Activated CD4-positive, alpha-beta T cell treated with anti-CD3 and anti-CD28 coated beads for 36 hours (primary cell): ENCODE measurements at regions of chr14 and their contacts with region 1.

Region 1: DNA sequence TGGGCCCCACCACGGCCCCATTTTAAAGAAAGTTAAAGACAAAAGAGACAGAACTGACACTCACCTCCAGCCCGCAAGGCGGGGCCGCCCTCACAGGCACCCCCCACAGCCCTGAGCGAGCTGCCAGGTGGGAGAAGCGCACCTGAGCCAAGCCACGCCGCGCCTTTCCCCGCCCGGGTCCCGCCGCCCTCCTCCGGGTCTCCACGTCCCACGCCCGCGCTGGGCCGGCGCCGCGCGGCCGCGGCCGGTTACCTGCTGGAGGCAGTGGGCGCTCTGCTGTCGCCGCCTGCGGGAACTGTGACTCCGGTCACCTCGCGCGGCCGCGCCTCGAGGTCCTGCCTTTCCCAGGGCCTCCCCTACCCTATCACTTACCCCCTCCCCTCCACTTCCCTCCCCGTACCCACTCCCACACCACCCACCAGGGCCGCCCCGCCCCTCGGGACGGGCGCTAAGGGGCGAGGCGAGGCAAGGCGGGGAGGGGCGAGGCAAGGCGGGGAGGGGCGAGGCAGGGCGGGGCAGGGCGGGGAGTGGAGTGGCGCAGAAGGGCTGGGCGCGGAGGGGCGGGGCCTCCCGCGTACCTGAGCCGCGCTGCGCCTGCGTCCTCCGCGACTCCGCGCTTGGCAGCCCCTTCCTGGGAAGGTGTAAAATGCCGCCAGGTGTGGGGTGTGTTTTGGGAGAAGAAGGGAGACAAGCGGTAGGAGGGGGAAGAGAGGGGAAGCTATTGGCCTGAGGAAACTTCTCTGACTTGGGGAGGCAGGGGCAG is 31.0 kb downstream of the TC2N start:
- DNase-seq: peak; percentile 97
- ATAC-seq: peak; percentile 97
- H3K4me3 Mint-ChIP-seq: peak overlapping the region; percentile 83
- H3K27ac Mint-ChIP-seq: peak overlapping the region; percentile 76
- H3K4me1 Mint-ChIP-seq: peaks cover 70% of the 10 kb centered on the region
- H3K27me3 Mint-ChIP-seq: no peaks in the 10 kb centered on the region

Region 2: GRCh38 chr14:91573893-91574837 is 262.1 kb before region 1 on chr14:
- CTCF ChIA-PET with region 1: no interaction called
- POLR2A ChIA-PET with region 1: no interaction called
- intact Hi-C with region 1: loop called in 1 of 2 experiments (anchors 1 kb)
- DNase-seq: peak; percentile 96
- ATAC-seq: peak; percentile 91
- H3K4me3 Mint-ChIP-seq: peak overlapping the region; percentile 76
- H3K27ac Mint-ChIP-seq: peak overlapping the region; percentile 56
- H3K4me1 Mint-ChIP-seq: peaks cover 18% of the 10 kb centered on the region
- H3K27me3 Mint-ChIP-seq: peaks cover 10% of the 10 kb centered on the region

Region 3: DNA sequence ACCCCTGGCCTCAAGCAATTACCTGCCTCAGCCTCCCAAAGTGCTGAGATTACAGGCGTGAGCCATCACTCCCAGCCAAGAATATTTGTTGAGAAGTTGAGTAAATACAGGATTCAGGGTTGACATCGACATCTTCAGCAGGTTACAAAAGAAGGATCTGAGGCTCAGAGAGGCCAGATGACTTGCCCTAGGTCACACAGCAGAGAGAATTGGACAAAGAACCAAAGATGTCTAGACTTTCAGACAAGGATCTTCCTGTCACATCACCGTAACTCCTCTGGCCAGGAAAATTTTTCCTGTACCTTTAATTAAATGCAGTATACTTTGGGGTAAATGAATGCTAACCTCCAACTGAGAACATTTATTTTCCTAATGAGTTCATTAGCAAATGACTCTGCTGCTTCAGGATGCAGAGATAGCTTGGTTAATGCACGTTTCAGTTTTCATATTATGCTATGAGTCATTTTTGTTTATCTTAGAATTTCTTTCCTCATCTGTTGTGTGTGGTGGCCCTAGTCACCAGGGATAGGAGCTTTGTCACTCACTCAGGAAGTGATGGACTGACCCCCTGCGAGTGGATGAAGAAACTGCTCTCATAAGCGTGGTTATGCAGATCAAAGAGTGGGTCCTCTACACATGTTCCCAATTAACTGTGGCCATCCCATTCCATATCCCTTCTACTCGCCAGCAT is 22.1 kb after region 1 on chr14:
- CTCF ChIA-PET with region 1: interaction called, 7 read pairs
- POLR2A ChIA-PET with region 1: no interaction called
- intact Hi-C with region 1: loop called in 1 of 2 experiments (anchors 1 kb)
- DNase-seq: peak; percentile 58
- ATAC-seq: peak; percentile 75
- H3K4me3 Mint-ChIP-seq: peak overlapping the region; percentile 9
- H3K27ac Mint-ChIP-seq: peak overlapping the region; percentile 86
- H3K4me1 Mint-ChIP-seq: peaks cover 91% of the 10 kb centered on the region
- H3K27me3 Mint-ChIP-seq: no peaks in the 10 kb centered on the region

Region 4: GRCh38 chr14:91893007-91893406 is 56.7 kb after region 1 on chr14:
- CTCF ChIA-PET with region 1: interaction called, 3 read pairs
- POLR2A ChIA-PET with region 1: no interaction called
- intact Hi-C with region 1: loop called in 1 of 2 experiments (anchors 1 kb)
- DNase-seq: peak; percentile 53
- ATAC-seq: peak; percentile 53
- H3K4me3 Mint-ChIP-seq: no peak overlapping the region
- H3K27ac Mint-ChIP-seq: peak overlapping the region; percentile 89
- H3K4me1 Mint-ChIP-seq: peaks cover 51% of the 10 kb centered on the region
- H3K27me3 Mint-ChIP-seq: no peaks in the 10 kb centered on the region

Region 5: GRCh38 chr14:92106143-92106926 is 270.0 kb after region 1 on chr14 and contains the start of gene ATXN3:
- CTCF ChIA-PET with region 1: no interaction called
- POLR2A ChIA-PET with region 1: no interaction called
- intact Hi-C with region 1: loop called in 1 of 2 experiments (anchors 2 kb)
- DNase-seq: peak; percentile 98
- ATAC-seq: peak; percentile 97
- H3K4me3 Mint-ChIP-seq: peak within 1 kb of the TSS; percentile 90
- H3K27ac Mint-ChIP-seq: peak within 1 kb of the TSS; percentile 92
- H3K4me1 Mint-ChIP-seq: peaks cover 42% of the 10 kb centered on the region
- H3K27me3 Mint-ChIP-seq: no peaks in the 10 kb centered on the region
- total RNA-seq, gene ATXN3: 32.7 to 36.0 TPM